ENCODE measurements at regions of chr5 and their contacts with region 1.

Region 1: DNA sequence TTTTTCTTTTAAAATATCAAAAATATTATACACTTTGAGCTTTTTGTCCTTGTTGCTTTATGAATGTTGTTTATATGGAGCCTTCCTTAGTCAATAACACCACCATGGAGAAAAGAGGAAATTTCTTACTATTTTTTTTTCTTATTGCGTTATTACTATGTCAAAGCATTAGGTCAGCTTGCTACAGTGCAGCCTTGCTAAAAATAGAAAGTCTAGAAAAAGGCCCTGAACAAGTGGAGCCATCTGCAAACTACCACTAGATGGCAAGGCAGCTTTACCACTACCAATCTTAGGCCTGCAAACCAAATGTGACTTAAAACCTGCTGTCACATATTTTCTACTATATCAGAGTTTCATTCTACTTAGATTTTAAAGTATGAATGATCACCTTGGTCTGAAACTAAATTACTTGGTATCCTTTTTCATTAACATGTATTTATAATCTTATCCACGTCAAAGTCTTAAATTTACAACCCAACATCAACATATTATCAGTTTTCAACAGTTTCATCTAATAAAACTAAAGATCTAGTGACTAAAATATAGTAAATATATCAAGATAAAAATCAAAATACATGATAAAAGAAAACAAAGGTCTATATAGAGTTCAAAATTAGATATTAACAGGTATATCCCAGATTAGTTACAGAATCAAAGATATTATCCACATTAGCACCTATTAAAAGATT is 113.1 kb upstream of the ACOT12 start:
- DNase-seq: peak; percentile 94
- H3K4me3 ChIP-seq: no peak overlapping the region
- H3K27ac ChIP-seq: no peak overlapping the region
- H3K4me1 ChIP-seq: peaks cover 14% of the 10 kb centered on the region
- H3K27me3 ChIP-seq: no peaks in the 10 kb centered on the region
- CTCF ChIP-seq: peak; percentile 78
- POLR2A ChIP-seq: no peak

Region 2: GRCh38 chr5:81838307-81838906 is 331.4 kb after region 1 on chr5:
- CTCF ChIA-PET with region 1: interaction called, 25 read pairs
- POLR2A ChIA-PET with region 1: no interaction called
- dilution Hi-C with region 1: no loop called
- intact Hi-C with region 1: loop called (anchors 1 kb)
- DNase-seq: peak; percentile 34
- H3K4me3 ChIP-seq: no peak overlapping the region
- H3K27ac ChIP-seq: no peak overlapping the region
- H3K4me1 ChIP-seq: no peaks in the 10 kb centered on the region
- H3K27me3 ChIP-seq: no peaks in the 10 kb centered on the region
- CTCF ChIP-seq: peak in 1 of 2 donors; percentile 46
- POLR2A ChIP-seq: no peak

Region 3: DNA sequence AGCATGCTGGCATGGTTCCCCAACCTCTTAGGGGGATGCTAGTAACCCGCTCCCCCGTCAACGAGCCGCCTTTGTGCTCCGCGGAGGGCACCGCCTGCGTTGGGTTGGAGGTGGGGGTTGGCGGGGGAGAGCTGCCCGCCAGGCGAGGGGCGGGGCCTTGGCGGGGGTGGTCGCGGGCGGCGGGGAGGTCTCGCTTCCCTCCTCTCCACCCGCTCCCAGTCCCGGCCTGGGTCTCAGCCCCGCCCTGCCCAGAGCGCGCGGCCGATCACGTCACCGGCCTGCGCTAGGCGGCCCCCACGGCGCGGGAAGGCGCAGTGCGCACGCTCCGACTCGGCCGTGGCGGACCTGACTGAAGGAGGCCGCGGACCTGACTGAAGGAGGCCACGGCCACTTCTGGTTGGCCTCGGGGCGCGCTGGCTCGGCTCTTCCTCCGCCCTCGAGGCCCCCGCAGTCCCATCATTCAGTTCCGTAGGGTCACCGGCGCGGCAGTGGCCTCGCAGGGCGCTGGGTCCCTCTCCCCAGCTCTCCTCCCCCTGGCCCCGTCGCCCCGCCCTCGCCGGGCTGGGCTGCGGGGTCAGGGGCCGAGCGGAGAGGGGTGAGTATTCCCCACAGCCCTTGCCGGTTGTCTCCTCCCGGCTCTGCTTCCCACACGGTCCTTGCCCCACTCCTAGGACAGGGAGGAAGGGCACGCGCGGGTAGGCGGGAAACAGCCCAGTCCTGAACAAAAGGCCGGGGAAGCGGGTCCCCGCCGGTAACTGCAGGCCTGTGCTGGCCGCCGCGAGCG is 464.9 kb after region 1 on chr5 and contains the start of gene ATG10:
- CTCF ChIA-PET with region 1: interaction called, 8 read pairs
- POLR2A ChIA-PET with region 1: no interaction called
- dilution Hi-C with region 1: no loop called
- intact Hi-C with region 1: loop called (anchors 1 kb)
- DNase-seq: peak; percentile 96
- H3K4me3 ChIP-seq: peak within 1 kb of the TSS; percentile 64 to 89 (median 71)
- H3K27ac ChIP-seq: peak within 1 kb of the TSS; percentile 71
- H3K4me1 ChIP-seq: no peaks in the 10 kb centered on the region
- H3K27me3 ChIP-seq: no peaks in the 10 kb centered on the region
- CTCF ChIP-seq: no peak
- POLR2A ChIP-seq: peak; percentile 89
- total RNA-seq, gene ATG10: 3.9 and 5.9 TPM in 2 replicates

Region 4: DNA sequence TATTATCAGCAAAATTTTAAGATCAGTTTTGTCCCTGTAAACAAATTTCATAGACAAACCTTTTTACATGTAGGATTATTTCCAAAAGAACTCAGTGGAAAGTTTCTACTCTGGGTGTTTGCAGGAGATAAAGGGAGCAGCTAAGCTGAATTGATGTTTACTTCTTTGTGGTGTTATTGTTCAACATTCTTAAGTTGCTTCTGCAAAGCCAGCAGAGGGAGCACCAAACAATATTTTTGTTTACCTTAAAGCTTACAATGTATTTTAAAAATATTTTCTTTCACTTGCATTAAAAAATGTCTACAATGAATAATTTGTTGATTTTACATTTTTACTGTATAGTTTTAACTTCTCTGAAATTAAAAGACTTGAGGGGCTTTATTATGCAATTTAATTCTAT is 600.2 kb after region 1 on chr5:
- CTCF ChIA-PET with region 1: interaction called, 3 read pairs
- POLR2A ChIA-PET with region 1: no interaction called
- dilution Hi-C with region 1: no loop called
- intact Hi-C with region 1: loop called (anchors 5 kb)
- DNase-seq: peak; percentile 32
- H3K4me3 ChIP-seq: no peak overlapping the region
- H3K27ac ChIP-seq: no peak overlapping the region
- H3K4me1 ChIP-seq: no peaks in the 10 kb centered on the region
- H3K27me3 ChIP-seq: no peaks in the 10 kb centered on the region
- CTCF ChIP-seq: peak; percentile 9 to 31
- POLR2A ChIP-seq: no peak

Region 5: DNA sequence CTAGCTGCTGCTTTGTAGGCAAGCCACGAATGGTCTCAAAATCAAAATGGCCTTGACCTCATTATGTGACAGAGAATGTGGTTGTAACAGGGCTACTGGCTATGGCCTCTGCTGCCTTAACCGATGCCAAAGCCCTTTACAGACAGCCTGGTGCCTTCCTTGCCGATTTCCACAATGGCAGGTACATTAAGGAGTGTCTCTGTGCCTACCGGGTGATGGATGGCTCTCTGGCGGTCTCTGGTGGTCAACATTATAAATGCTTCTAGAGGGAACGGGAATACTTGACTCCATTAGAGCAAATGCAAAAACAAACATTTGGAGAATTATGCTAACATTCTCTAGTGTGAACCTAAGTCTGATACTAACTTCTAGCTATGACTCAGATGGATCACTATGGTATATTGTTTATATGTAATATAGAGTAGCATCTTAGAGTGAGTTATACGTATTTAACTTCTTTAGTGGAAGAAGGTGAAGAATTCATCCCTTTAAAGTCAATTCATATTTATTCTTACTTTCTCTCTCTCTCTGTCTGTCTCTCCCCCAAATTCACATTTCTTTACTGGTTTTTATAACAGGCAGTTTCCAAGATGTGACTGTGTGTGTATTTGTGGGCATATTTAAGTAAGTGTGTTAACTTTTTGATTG is 718.6 kb after region 1 on chr5:
- CTCF ChIA-PET with region 1: interaction called, 5 read pairs
- POLR2A ChIA-PET with region 1: no interaction called
- dilution Hi-C with region 1: no loop called
- intact Hi-C with region 1: loop called (anchors 1 kb)
- DNase-seq: peak; percentile 78
- H3K4me3 ChIP-seq: no peak overlapping the region
- H3K27ac ChIP-seq: no peak overlapping the region
- H3K4me1 ChIP-seq: peaks cover 2% of the 10 kb centered on the region
- H3K27me3 ChIP-seq: no peaks in the 10 kb centered on the region
- CTCF ChIP-seq: peak; percentile 66 to 85
- POLR2A ChIP-seq: no peak

Measured in endothelial cell of umbilical vein (primary cell).